Posterior cingulate gyrus (tissue), 11 donors: ENCODE measurements at regions of chr13 and their contacts with region 1.

Region 1: DNA sequence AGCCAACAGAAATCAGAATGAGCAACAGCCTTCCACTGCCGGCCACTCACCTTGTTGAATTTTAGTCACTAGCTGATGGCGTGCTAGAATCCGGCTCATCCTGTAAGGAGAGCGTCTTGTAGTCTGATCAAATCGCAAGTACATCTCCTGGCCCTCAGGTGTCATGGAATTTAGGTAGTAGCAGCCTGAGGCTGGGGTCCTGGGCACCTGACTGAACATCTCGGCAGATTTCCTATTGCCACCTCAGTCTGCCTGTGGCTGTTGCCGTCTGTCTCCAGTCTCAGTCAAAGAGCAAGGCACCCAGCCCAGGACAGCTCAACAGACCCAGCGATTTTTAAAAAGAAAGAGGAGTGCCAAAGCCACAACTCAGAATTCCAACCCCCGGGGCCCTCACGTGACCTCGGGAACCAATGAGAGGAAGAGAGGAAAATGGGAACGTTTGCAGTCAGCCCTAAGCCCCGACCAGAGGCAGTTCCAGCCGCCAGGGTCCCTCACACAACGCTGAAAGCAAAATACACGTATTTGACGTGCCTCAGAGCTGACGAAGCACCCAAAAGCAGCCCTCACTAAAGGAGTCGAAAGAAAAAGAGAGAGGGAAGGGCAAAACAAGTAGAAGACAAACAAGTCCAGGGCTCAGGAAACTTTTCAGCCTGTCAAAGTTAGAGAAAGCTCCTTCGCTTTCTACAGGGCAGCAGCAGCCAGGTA is at the start of gene STARD13:
- DNase-seq: peak; percentile 87 to 98 (median 90)

Region 2: DNA sequence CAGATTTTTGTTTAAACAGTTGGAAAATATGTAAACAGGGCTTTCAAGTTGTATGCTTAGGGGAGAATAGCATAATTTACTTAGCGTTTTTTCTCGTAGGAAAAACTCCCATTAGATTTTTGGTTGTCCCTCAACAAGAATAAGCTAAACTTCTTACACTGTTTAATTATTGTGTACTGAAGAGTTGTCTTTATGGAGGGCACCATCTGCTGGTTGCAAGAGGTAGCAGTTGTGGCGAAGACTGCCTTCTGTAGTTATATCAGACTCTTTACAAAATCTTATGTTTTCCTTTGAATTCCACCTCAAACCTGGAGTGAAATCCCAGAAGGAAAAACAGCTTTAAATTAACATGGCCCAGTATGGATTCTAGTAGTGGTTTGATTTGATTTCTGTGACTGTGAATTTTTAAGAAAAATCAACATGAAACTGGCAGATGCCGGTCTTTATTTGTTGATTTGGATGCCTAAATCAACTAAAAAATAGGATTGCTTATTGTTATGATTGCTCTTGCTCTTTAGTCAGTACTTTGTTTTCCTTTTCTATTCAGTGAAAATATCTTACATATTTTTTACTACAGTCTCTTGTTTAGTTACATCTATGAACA is 646.0 kb before region 1 on chr13:
- intact Hi-C with region 1: loop called (anchors 10 kb)
- DNase-seq: peak in 6 of 10 donors; percentile 32 to 90 (median 58)

Region 3: GRCh38 chr13:33349986-33350826 is 64.6 kb after region 1 on chr13:
- intact Hi-C with region 1: loop called (anchors 10 kb)
- DNase-seq: peak in 6 of 10 donors; percentile 15 to 86 (median 58)

Region 4: GRCh38 chr13:33401238-33401637 is 115.7 kb after region 1 on chr13:
- intact Hi-C with region 1: no loop called
- DNase-seq: no peak